Heart left ventricle (tissue), 16 donors: ENCODE measurements at regions of chr12 and their contacts with region 1.

Region 1: DNA sequence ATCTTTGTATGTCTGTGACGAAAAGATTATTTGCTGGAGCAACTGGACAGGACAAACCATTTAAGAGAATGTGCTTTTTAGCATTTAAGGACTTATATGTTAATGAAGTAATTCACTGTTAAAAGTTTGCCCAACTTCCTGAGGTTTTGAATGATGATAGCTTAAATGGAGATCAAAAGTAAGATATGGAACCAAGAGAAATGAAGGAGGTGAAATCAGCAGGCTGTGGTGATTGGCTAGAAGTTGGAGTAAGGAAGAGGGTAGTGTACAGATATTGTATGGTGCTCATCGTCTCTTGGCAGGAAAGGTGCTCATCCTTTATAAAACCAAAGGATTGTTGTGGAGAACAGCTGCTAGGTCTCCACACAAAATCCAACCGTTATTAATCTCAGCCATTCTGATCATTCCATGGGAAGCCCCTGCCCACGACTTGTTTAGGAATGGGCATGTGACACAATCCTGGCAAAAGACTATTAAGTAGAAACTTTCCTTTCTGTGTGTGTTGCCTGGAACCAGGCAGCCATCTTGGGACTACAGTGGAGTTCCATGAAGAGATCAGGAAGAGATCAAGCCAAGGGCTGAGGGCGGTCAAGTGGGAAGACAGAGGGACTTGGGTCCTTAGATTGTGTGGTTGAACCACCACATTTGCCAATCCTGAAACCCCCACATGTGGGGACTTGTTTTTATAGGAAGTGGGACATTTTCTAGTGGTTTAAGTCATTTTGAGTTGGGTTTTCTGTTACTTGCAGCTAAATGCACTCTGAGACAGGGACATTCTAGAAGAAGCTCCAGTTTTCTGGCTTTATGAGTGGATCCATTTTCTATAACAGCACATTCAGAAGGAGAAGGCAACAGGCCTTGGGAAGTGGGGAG is 56.8 kb upstream of the CHST11 start:
- DNase-seq: no peak
- ATAC-seq: no peak
- H3K4me3 ChIP-seq: no peak overlapping the region
- H3K27ac ChIP-seq: no peak overlapping the region
- H3K4me1 ChIP-seq: no peaks in the 10 kb centered on the region
- H3K27me3 ChIP-seq: no peaks in the 10 kb centered on the region
- CTCF ChIP-seq: no peak
- POLR2A ChIP-seq: no peak

Region 2: GRCh38 chr12:104505095-104505818 is 105.3 kb after region 1 on chr12:
- intact Hi-C with region 1: no loop called
- DNase-seq: no peak
- ATAC-seq: no peak
- H3K4me3 ChIP-seq: no peak overlapping the region
- H3K27ac ChIP-seq: peak overlapping the region in 1 of 12 donors; percentile 1
- H3K4me1 ChIP-seq: peaks cover 0 to 67% (median 16%) of the 10 kb centered on the region in 12 donors
- H3K27me3 ChIP-seq: no peaks in the 10 kb centered on the region
- CTCF ChIP-seq: no peak
- POLR2A ChIP-seq: no peak

Region 3: GRCh38 chr12:104653730-104654664 is 254.0 kb after region 1 on chr12:
- intact Hi-C with region 1: loop called in 1 of 10 experiments (anchors 10 kb)
- DNase-seq: no peak
- ATAC-seq: no peak
- H3K4me3 ChIP-seq: no peak overlapping the region
- H3K27ac ChIP-seq: no peak overlapping the region
- H3K4me1 ChIP-seq: peaks cover 0 to 42% (median 0%) of the 10 kb centered on the region in 12 donors
- H3K27me3 ChIP-seq: no peaks in the 10 kb centered on the region
- CTCF ChIP-seq: peak in 6 of 12 donors; percentile 8 to 38 (median 19)
- POLR2A ChIP-seq: no peak